Naive thymus-derived CD8-positive, alpha-beta T cell (primary cell): ENCODE measurements at regions of chr19 and their contacts with region 1.

Region 1: GRCh38 chr19:43595999-43596841 is at the starts of genes IRGQ and ZNF576:
- DNase-seq: peak; percentile 99 to 100 (median 100)
- ATAC-seq: peak; percentile 74 to 79
- H3K4me3 Mint-ChIP-seq: peak within 1 kb of the TSS; percentile 94 to 99 (median 96)
- H3K27ac Mint-ChIP-seq: peak within 1 kb of the TSS; percentile 96 to 100 (median 100)
- H3K4me1 Mint-ChIP-seq: peaks cover 26 to 53% (median 47%) of the 10 kb centered on the region in 4 donors
- H3K27me3 Mint-ChIP-seq: peaks cover 0 to 2% (median 0%) of the 10 kb centered on the region in 5 donors
- polyA plus RNA-seq, gene IRGQ: 0.37 to 1.1 (median 0.82) TPM
- polyA plus RNA-seq, gene ZNF576: 6.2 to 10.4 (median 9.3) TPM

Region 2: GRCh38 chr19:43526884-43527859 is 69.0 kb before region 1 on chr19 and contains the start of gene ETHE1:
- POLR2A ChIA-PET with region 1: interaction called, 51 read pairs
- DNase-seq: peak; percentile 35 to 75 (median 61)
- ATAC-seq: peak; percentile 72 to 87
- H3K4me3 Mint-ChIP-seq: peak within 1 kb of the TSS; percentile 73 to 94 (median 79)
- H3K27ac Mint-ChIP-seq: peak within 1 kb of the TSS; percentile 75 to 97 (median 90)
- H3K4me1 Mint-ChIP-seq: peaks cover 10 to 38% (median 28%) of the 10 kb centered on the region in 4 donors
- H3K27me3 Mint-ChIP-seq: no peaks in the 10 kb centered on the region
- polyA plus RNA-seq, gene ETHE1: 62.0 to 78.7 (median 64.5) TPM

Region 3: DNA sequence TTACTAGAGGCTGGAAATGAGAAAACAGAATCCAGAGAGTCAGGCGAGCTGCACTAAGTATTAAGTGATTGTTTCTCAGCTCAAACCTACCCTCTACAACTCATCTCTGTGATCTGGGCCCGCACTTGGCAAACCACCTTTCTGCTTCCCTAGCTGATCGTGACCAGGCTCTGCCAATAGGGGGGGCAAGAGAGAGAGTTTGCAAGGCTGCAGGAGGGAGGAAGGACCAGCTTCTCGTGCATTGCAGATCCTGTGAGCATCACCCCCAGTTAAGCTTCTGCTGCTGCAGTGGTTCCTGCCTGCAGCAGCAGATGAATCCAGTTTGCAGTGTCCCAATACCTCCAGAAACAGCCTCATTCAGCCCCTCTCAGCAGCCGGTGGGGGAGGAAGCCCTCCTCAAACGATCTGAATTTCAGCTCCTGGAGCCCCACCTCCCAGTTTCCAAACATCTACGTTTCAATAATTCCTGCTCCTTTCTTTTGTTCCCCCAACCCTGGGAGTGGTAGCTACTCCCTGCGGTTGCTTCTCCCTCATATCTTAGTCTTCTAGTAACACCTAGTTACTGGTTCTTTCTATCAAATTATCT is 40.9 kb before region 1 on chr19:
- POLR2A ChIA-PET with region 1: interaction called, 49 read pairs
- DNase-seq: peak; percentile 63 to 90 (median 82)
- ATAC-seq: peak; percentile 99
- H3K4me3 Mint-ChIP-seq: peak overlapping the region in 3 of 10 donors; percentile 15 to 47 (median 20)
- H3K27ac Mint-ChIP-seq: peak overlapping the region; percentile 26 to 89 (median 70)
- H3K4me1 Mint-ChIP-seq: peaks cover 10 to 33% (median 19%) of the 10 kb centered on the region in 4 donors
- H3K27me3 Mint-ChIP-seq: no peaks in the 10 kb centered on the region

Region 4: GRCh38 chr19:43575156-43575950 is 20.9 kb before region 1 on chr19 and contains the starts of genes PINLYP and XRCC1:
- POLR2A ChIA-PET with region 1: interaction called, 55 read pairs
- DNase-seq: peak; percentile 86 to 99 (median 97)
- ATAC-seq: peak; percentile 95 to 98
- H3K4me3 Mint-ChIP-seq: peak within 1 kb of the TSS; percentile 91 to 99 (median 96)
- H3K27ac Mint-ChIP-seq: peak within 1 kb of the TSS; percentile 87 to 100 (median 98)
- H3K4me1 Mint-ChIP-seq: peaks cover 29 to 69% (median 63%) of the 10 kb centered on the region in 4 donors
- H3K27me3 Mint-ChIP-seq: no peaks in the 10 kb centered on the region
- polyA plus RNA-seq, gene PINLYP: 0.68 to 2.3 (median 1.7) TPM
- polyA plus RNA-seq, gene XRCC1: 16.8 to 34.6 (median 33.7) TPM

Region 5: GRCh38 chr19:43619262-43620060 is 23.2 kb after region 1 on chr19 and contains the start of gene ZNF428:
- POLR2A ChIA-PET with region 1: interaction called, 15 read pairs
- DNase-seq: peak; percentile 78 to 92 (median 82)
- ATAC-seq: peak; percentile 89 to 90
- H3K4me3 Mint-ChIP-seq: peak within 1 kb of the TSS; percentile 95 to 99 (median 98)
- H3K27ac Mint-ChIP-seq: peak within 1 kb of the TSS; percentile 94 to 99 (median 98)
- H3K4me1 Mint-ChIP-seq: peaks cover 20 to 51% (median 40%) of the 10 kb centered on the region in 4 donors
- H3K27me3 Mint-ChIP-seq: no peaks in the 10 kb centered on the region
- polyA plus RNA-seq, gene ZNF428: 16.5 to 20.6 (median 18.3) TPM